Right lobe of liver (tissue), 6 donors: ENCODE measurements at regions of chr1 and their contacts with region 1.

Region 1: GRCh38 chr1:17134034-17134433 is 14.8 kb upstream of the PADI2 start:
- DNase-seq: no peak
- ATAC-seq: no peak
- H3K4me3 ChIP-seq: no peak overlapping the region
- H3K27ac ChIP-seq: no peak overlapping the region
- H3K4me1 ChIP-seq: no peaks in the 10 kb centered on the region
- H3K27me3 ChIP-seq: no peaks in the 10 kb centered on the region
- CTCF ChIP-seq: no peak
- POLR2A ChIP-seq: no peak

Region 2: GRCh38 chr1:17236779-17237560 is 102.9 kb after region 1 on chr1:
- intact Hi-C with region 1: loop called in 1 of 2 experiments (anchors 5 kb)
- DNase-seq: peak; percentile 90 to 95 (median 91)
- ATAC-seq: peak; percentile 84 to 93 (median 90)
- H3K4me3 ChIP-seq: no peak overlapping the region
- H3K27ac ChIP-seq: no peak overlapping the region
- H3K4me1 ChIP-seq: peaks cover 0 to 5% (median 0%) of the 10 kb centered on the region in 4 donors
- H3K27me3 ChIP-seq: no peaks in the 10 kb centered on the region
- CTCF ChIP-seq: peak; percentile 94 to 96 (median 94)
- POLR2A ChIP-seq: no peak